Activated T-helper 1 cell treated with anti-CD3 and anti-CD28 coated beads, Interleukin-12 subunit alpha, Interleukin-12 subunit beta, Interleukin-2, Interleukin-4 antibody, amounts not matched to agents 30 ng/mL and 10 ng/mL and 1 ng/mL, durations not matched to agents 14 hours and 24 hours and 36 hours (primary cell): ENCODE measurements at regions of chr5 and their contacts with region 1.

Region 1: DNA sequence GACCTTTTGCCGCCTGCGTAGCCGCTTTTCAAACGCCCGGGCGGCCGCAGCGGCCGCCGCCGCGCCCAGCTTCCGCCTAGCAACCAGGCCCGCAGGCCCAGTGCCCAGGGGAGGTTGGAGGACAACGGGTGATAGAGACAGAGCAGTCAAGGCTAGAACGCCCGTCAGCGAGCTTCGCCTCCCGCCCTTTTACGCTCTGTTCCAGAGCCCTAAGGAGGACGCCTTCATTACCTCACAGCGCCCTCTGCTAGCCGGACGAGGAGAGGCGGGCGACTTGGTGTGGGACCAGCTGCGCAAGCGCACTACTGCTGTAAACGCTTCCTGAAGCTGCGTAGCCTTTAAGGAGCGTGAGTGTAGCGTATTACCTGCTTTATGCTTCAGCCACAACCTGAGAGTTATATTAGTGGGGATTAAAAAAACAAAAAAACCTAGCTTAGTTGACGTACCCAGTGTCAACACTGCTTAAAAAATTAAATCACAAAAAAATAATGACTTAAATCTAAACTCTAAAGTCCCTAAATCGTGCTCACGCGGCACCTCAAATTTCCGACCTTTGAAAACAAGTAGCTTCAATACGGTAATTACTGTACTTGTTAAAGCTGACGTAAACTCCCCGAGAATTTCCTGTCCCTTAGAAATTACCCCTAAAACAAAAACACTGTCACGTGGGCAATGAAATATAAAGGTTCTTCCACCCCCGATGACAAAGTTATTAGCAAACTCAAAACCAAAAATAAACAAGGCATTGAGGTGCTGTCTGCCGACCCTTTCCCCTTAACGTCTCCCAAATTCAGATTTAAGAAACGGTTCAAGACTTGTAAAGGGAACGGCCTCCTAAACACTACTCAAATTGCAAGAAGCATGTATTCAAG is at the start of gene CEP120:
- DNase-seq: peak; percentile 96
- H3K4me3 Mint-ChIP-seq: no peak within 1 kb of the TSS
- H3K27ac Mint-ChIP-seq: peak within 1 kb of the TSS; percentile 69
- H3K4me1 Mint-ChIP-seq: peaks cover 20% of the 10 kb centered on the region
- H3K27me3 Mint-ChIP-seq: no peaks in the 10 kb centered on the region
- total RNA-seq, gene CEP120: 29.8 and 32.5 TPM in 2 replicates

Region 2: GRCh38 chr5:123438902-123439301 is 15.4 kb after region 1 on chr5:
- intact Hi-C with region 1: loop called (anchors 1 kb)
- DNase-seq: peak; percentile 29
- H3K4me3 Mint-ChIP-seq: peak overlapping the region; percentile 27
- H3K27ac Mint-ChIP-seq: peak overlapping the region; percentile 74
- H3K4me1 Mint-ChIP-seq: peaks cover 36% of the 10 kb centered on the region
- H3K27me3 Mint-ChIP-seq: no peaks in the 10 kb centered on the region

Region 3: GRCh38 chr5:123460296-123460729 is 36.8 kb after region 1 on chr5:
- intact Hi-C with region 1: loop called (anchors 1 kb)
- DNase-seq: no peak
- H3K4me3 Mint-ChIP-seq: peak overlapping the region; percentile 1
- H3K27ac Mint-ChIP-seq: peak overlapping the region; percentile 85
- H3K4me1 Mint-ChIP-seq: peaks cover 11% of the 10 kb centered on the region
- H3K27me3 Mint-ChIP-seq: no peaks in the 10 kb centered on the region

Region 4: DNA sequence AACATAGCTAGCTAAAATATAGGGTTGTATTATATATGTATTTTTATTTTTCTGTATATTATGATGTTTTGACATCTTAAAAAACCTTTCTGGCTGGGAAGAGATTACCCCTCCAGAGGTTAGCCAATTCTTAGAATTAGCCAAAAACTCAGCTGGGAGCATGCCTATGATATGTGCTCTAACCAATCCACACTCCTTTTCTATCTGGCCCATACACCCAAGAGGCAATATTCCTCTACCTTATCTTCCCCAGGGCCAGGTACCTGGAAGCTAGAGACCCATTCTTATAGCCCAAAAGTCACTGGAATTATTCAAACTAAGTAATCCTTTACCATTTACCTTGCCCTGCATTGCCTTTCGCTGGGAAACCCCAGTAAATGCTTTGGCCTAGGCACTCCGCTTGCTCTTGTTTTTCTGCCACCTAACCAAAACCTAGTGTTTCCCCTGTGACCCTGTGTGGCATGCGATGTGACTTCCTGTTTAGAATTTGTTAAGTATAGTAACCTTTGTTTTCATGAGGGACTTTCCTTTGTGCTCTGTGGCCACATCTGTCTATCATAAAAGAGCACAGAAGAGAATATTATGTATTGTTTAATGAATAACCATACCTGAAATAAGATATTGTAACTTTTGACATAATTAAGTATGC is 125.9 kb after region 1 on chr5:
- intact Hi-C with region 1: loop called (anchors 1 kb)
- DNase-seq: peak; percentile 70
- H3K4me3 Mint-ChIP-seq: peak overlapping the region; percentile 1
- H3K27ac Mint-ChIP-seq: peak overlapping the region; percentile 91
- H3K4me1 Mint-ChIP-seq: peaks cover 38% of the 10 kb centered on the region
- H3K27me3 Mint-ChIP-seq: no peaks in the 10 kb centered on the region

Region 5: GRCh38 chr5:123610665-123611405 is 187.3 kb after region 1 on chr5:
- intact Hi-C with region 1: loop called (anchors 1 kb)
- DNase-seq: peak; percentile 11
- H3K4me3 Mint-ChIP-seq: no peak overlapping the region
- H3K27ac Mint-ChIP-seq: no peak overlapping the region
- H3K4me1 Mint-ChIP-seq: peaks cover 12% of the 10 kb centered on the region
- H3K27me3 Mint-ChIP-seq: no peaks in the 10 kb centered on the region